Aorta (tissue), 5 donors: ENCODE measurements at regions of chr1 and their contacts with region 1.

Region 1: GRCh38 chr1:31663622-31664452 is 19.2 kb upstream of the PEF1 start:
- DNase-seq: no peak
- ATAC-seq: peak; percentile 78
- H3K4me3 ChIP-seq: no peak overlapping the region
- H3K27ac ChIP-seq: no peak overlapping the region
- H3K4me1 ChIP-seq: no peaks in the 10 kb centered on the region
- H3K27me3 ChIP-seq: no peaks in the 10 kb centered on the region

Region 2: GRCh38 chr1:31789259-31790065 is 125.6 kb after region 1 on chr1:
- intact Hi-C with region 1: loop called (anchors 1 to 2 kb)
- DNase-seq: peak; percentile 97 to 99
- ATAC-seq: peak; percentile 95
- H3K4me3 ChIP-seq: peak overlapping the region; percentile 5 to 49
- H3K27ac ChIP-seq: no peak overlapping the region
- H3K4me1 ChIP-seq: no peaks in the 10 kb centered on the region
- H3K27me3 ChIP-seq: no peaks in the 10 kb centered on the region

Region 3: GRCh38 chr1:32706491-32706890 is 1042.7 kb after region 1 on chr1:
- intact Hi-C with region 1: no loop called
- DNase-seq: peak in 1 of 2 donors; percentile 57
- ATAC-seq: no peak
- H3K4me3 ChIP-seq: no peak overlapping the region
- H3K27ac ChIP-seq: peak overlapping the region; percentile 12 to 68
- H3K4me1 ChIP-seq: peaks cover 0 to 4% of the 10 kb centered on the region in 2 donors
- H3K27me3 ChIP-seq: no peaks in the 10 kb centered on the region